ENCODE measurements at regions of chr1 and their contacts with region 1.

Region 1: DNA sequence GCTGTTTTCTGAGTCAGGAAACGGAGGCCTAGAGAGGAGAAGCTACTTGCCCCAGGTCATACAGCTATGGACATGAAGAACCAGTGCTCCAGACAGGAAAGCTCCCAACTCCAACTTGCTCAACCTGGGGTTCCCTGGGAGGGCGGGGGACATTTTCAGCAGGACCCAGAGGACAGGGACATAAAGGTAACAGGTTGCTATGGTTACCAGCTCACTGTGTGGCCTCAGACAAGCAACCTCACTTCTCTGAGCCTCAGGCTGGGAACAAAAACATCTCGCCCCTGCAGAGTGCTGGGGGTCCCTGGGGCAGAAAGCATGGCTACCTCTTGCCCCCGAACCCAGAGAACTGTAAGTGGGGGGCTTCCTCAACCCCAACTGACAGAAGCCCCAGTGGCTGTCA is 16.1 kb downstream of the FBXO2 start:
- DNase-seq: no peak
- H3K4me3 ChIP-seq: no peak overlapping the region
- H3K27ac ChIP-seq: no peak overlapping the region
- H3K4me1 ChIP-seq: no peaks in the 10 kb centered on the region
- H3K27me3 ChIP-seq: peaks cover 16% of the 10 kb centered on the region
- CTCF ChIP-seq: no peak
- EP300 ChIP-seq: no peak
- POLR2A ChIP-seq: no peak

Region 2: GRCh38 chr1:11594222-11594621 is 43.9 kb before region 1 on chr1:
- in situ Hi-C with region 1: no loop called
- intact Hi-C with region 1: loop called (anchors 1 kb)
- DNase-seq: no peak
- H3K4me3 ChIP-seq: no peak overlapping the region
- H3K27ac ChIP-seq: no peak overlapping the region
- H3K4me1 ChIP-seq: no peaks in the 10 kb centered on the region
- H3K27me3 ChIP-seq: peaks cover 12% of the 10 kb centered on the region
- CTCF ChIP-seq: no peak
- EP300 ChIP-seq: no peak
- POLR2A ChIP-seq: no peak

Region 3: DNA sequence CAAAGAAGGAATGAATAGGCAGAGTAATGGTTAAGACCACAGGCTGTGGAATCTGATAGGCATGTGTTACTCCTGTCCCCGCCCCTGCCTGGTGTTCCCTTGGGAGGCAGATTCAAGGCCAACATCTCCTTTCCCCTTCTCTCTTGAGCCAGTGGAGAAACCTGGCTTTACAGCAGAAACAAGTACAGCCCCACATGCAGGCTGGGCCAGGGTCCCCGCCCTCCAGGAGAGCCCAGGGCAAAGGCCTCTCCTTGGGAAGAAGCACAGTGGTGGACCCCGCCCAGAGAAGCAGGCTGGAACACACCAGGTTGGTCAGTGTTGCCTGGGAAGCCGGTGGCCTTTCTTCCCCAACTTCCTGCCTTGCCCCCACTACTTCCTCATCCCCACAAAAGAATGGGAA is 130.7 kb after region 1 on chr1:
- in situ Hi-C with region 1: no loop called
- intact Hi-C with region 1: no loop called
- DNase-seq: no peak
- H3K4me3 ChIP-seq: no peak overlapping the region
- H3K27ac ChIP-seq: no peak overlapping the region
- H3K4me1 ChIP-seq: no peaks in the 10 kb centered on the region
- H3K27me3 ChIP-seq: peaks cover 16% of the 10 kb centered on the region
- CTCF ChIP-seq: no peak
- EP300 ChIP-seq: no peak
- POLR2A ChIP-seq: no peak

Region 4: GRCh38 chr1:11862890-11863289 is 224.8 kb after region 1 on chr1:
- in situ Hi-C with region 1: no loop called
- intact Hi-C with region 1: no loop called
- DNase-seq: no peak
- H3K4me3 ChIP-seq: no peak overlapping the region
- H3K27ac ChIP-seq: no peak overlapping the region
- H3K4me1 ChIP-seq: peaks cover 0 to 4% (median 0%) of the 10 kb centered on the region in 4 donors
- H3K27me3 ChIP-seq: peaks cover 50% of the 10 kb centered on the region
- CTCF ChIP-seq: no peak
- EP300 ChIP-seq: no peak
- POLR2A ChIP-seq: no peak

Measured in transverse colon (tissue), 4 donors.